B cell (primary cell): ENCODE measurements at regions of chr20 and their contacts with region 1.

Region 1: DNA sequence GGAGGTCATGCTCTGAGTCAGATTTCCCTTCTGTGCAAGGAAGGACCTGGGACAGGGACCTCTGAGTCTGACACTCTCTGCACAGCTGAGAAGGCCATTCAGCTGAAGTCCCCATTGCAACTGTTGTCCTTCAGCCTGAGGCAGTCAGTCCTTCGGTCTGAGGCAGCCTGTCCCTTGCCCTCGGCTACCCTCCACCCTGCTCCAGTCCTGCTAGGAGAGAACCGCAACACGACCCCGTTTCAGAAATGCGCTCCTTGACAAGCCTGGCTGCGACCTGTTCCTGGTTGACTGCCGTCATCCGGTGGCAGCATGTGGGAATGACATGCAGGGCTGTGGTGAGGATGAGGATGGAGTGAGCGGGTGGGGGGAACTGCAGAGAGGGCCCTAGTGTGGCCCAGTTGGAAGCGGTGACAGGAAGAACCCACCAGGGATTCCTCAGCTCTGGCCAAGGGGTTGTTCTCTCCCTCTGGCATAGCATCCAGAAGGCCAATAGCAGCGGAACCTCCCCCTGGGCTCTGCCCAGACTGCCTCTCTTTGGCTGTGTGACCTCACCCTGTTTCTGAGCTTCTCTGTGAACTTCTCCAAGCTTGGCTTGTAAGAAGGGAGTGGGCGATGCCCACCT is 40.3 kb upstream of the ANGPT4 start:
- DNase-seq: peak; percentile 84
- ATAC-seq: peak; percentile 88
- H3K4me3 ChIP-seq: no peak overlapping the region
- H3K4me3 Mint-ChIP-seq: no peak overlapping the region
- H3K27ac ChIP-seq: no peak overlapping the region
- H3K27ac Mint-ChIP-seq: no peak overlapping the region
- H3K4me1 ChIP-seq: peaks cover 4 to 5% of the 10 kb centered on the region in 2 donors
- H3K4me1 Mint-ChIP-seq: peaks cover 2% of the 10 kb centered on the region
- H3K27me3 ChIP-seq: peaks cover 0 to 30% (median 1%) of the 10 kb centered on the region in 4 experiments
- H3K27me3 Mint-ChIP-seq: peaks cover 43% of the 10 kb centered on the region
- CTCF ChIP-seq: peak; percentile 99

Region 2: DNA sequence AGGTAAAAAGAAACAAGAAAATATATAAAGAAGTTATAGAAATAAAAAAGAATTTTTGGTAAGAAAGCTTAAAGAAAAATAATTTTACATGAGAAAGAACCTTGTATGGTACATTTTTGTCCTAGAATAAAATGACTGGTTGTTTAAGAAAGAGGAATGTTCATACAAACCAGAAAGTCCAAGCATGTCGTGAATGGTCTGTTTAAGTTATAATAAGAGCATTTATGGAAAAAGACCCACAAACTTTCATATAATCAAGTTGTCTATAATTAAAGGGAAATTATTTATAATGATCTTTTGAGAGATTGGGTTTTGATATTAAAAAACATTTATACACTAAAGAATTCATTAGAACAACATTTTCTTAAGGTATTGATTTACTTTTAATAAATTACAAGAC is 150.7 kb before region 1 on chr20:
- CTCF ChIA-PET with region 1: interaction called, 35 read pairs
- POLR2A ChIA-PET with region 1: no interaction called
- intact Hi-C with region 1: no loop called
- DNase-seq: no peak
- ATAC-seq: no peak
- H3K4me3 ChIP-seq: no peak overlapping the region
- H3K4me3 Mint-ChIP-seq: no peak overlapping the region
- H3K27ac ChIP-seq: no peak overlapping the region
- H3K27ac Mint-ChIP-seq: no peak overlapping the region
- H3K4me1 ChIP-seq: no peaks in the 10 kb centered on the region
- H3K4me1 Mint-ChIP-seq: no peaks in the 10 kb centered on the region
- H3K27me3 ChIP-seq: peaks cover 0 to 4% (median 2%) of the 10 kb centered on the region in 4 experiments
- H3K27me3 Mint-ChIP-seq: peaks cover 9% of the 10 kb centered on the region
- CTCF ChIP-seq: no peak

Region 3: DNA sequence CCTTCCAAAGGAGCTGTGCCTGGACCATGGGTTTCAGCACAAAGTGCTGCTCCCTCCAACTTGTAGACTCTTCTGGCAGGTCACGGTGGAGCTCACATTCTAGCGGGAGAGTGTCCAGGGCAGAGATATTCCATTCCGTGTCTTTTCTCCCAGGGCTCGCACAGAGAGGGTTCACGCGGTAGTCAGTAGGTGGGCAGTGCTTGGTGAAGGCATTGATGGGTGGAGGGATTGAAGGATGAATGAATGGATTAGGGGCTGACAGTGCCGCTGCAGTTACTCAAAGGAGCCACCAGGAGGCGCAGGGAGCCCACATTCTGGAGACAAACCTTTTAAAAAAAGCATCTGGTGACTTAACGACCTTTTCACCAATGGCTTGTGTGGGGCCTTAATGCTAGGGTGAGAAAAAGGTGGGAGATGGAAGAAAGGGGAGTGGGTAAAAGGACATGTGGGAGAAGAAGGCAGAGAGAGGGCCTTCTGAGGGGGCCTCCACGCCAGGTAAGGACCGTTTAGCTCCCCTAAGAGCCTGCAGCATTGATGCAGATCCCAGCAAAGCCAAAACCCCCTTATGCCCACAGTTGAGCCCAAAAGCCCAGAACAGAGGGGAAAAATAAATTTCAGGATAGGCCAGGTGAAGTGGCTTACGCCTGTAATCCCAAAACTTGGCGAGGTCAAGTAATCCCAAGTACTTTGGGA is 140.4 kb before region 1 on chr20:
- CTCF ChIA-PET with region 1: interaction called, 301 read pairs
- POLR2A ChIA-PET with region 1: no interaction called
- intact Hi-C with region 1: no loop called
- DNase-seq: peak; percentile 80
- ATAC-seq: peak; percentile 78
- H3K4me3 ChIP-seq: no peak overlapping the region
- H3K4me3 Mint-ChIP-seq: no peak overlapping the region
- H3K27ac ChIP-seq: no peak overlapping the region
- H3K27ac Mint-ChIP-seq: no peak overlapping the region
- H3K4me1 ChIP-seq: peaks cover 0 to 3% of the 10 kb centered on the region in 2 donors
- H3K4me1 Mint-ChIP-seq: no peaks in the 10 kb centered on the region
- H3K27me3 ChIP-seq: no peaks in the 10 kb centered on the region
- H3K27me3 Mint-ChIP-seq: peaks cover 27% of the 10 kb centered on the region
- CTCF ChIP-seq: peak; percentile 99

Region 4: DNA sequence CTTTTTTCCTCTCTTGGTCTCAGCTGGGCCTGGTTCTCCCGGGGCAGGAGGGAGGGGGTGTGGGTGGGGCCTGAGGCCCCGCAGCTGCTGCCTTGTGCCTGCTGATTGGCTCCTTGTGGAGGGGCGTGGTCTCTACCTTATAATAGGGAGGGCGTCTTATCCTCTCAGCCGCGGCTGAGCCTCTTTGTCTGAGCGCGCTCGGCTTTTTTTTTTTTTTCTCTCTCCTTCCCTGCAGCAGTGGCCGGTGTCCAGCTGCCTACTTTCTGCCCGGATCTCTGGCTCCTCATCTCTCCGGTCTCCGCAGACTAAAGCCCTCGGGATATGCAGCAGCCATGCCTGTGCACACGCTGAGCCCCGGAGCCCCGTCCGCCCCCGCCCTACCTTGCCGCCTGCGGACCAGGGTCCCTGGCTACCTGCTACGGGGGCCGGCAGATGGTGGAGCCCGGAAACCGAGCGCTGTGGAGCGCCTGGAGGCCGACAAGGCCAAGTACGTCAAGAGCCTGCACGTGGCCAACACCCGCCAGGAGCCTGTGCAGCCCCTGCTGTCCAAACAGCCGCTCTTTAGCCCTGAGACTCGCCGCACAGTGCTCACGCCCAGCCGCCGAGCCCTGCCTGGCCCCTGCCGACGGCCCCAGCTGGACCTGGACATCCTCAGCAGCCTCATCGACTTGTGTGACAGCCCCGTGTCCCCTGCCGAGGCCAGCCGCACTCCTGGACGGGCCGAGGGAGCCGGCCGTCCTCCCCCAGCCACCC is 111.8 kb before region 1 on chr20:
- CTCF ChIA-PET with region 1: interaction called, 14 read pairs
- POLR2A ChIA-PET with region 1: interaction called, 3 read pairs
- intact Hi-C with region 1: no loop called
- DNase-seq: peak; percentile 92
- ATAC-seq: peak; percentile 98
- H3K4me3 ChIP-seq: peak overlapping the region in 4 of 5 experiments; percentile 65 to 77 (median 68)
- H3K4me3 Mint-ChIP-seq: peak overlapping the region; percentile 86
- H3K27ac ChIP-seq: peak overlapping the region; percentile 10 to 80
- H3K27ac Mint-ChIP-seq: peak overlapping the region; percentile 71
- H3K4me1 ChIP-seq: peaks cover 64% of the 10 kb centered on the region in 2 donors
- H3K4me1 Mint-ChIP-seq: peaks cover 60% of the 10 kb centered on the region
- H3K27me3 ChIP-seq: peaks cover 0 to 19% (median 6%) of the 10 kb centered on the region in 4 experiments
- H3K27me3 Mint-ChIP-seq: peaks cover 4% of the 10 kb centered on the region
- CTCF ChIP-seq: no peak

Region 5: GRCh38 chr20:976033-976432 is 19.6 kb after region 1 on chr20:
- CTCF ChIA-PET with region 1: interaction called, 13 read pairs
- POLR2A ChIA-PET with region 1: no interaction called
- intact Hi-C with region 1: no loop called
- DNase-seq: no peak
- ATAC-seq: no peak
- H3K4me3 ChIP-seq: no peak overlapping the region
- H3K4me3 Mint-ChIP-seq: no peak overlapping the region
- H3K27ac ChIP-seq: no peak overlapping the region
- H3K27ac Mint-ChIP-seq: no peak overlapping the region
- H3K4me1 ChIP-seq: no peaks in the 10 kb centered on the region
- H3K4me1 Mint-ChIP-seq: no peaks in the 10 kb centered on the region
- H3K27me3 ChIP-seq: peaks cover 0 to 6% (median 0%) of the 10 kb centered on the region in 4 experiments
- H3K27me3 Mint-ChIP-seq: peaks cover 21% of the 10 kb centered on the region
- CTCF ChIP-seq: no peak

Region 6: GRCh38 chr20:1212607-1213396 is 256.4 kb after region 1 on chr20:
- CTCF ChIA-PET with region 1: interaction called, 8 read pairs
- POLR2A ChIA-PET with region 1: no interaction called
- intact Hi-C with region 1: loop called (anchors 5 kb)
- DNase-seq: peak; percentile 72
- ATAC-seq: peak; percentile 83
- H3K4me3 ChIP-seq: no peak overlapping the region
- H3K4me3 Mint-ChIP-seq: peak overlapping the region; percentile 18
- H3K27ac ChIP-seq: no peak overlapping the region
- H3K27ac Mint-ChIP-seq: no peak overlapping the region
- H3K4me1 ChIP-seq: peaks cover 0 to 3% of the 10 kb centered on the region in 2 donors
- H3K4me1 Mint-ChIP-seq: peaks cover 3% of the 10 kb centered on the region
- H3K27me3 ChIP-seq: peaks cover 0 to 15% (median 11%) of the 10 kb centered on the region in 4 experiments
- H3K27me3 Mint-ChIP-seq: peaks cover 46% of the 10 kb centered on the region
- CTCF ChIP-seq: peak; percentile 88